ENCODE measurements at regions of chr7 and their contacts with region 1.

Region 1: DNA sequence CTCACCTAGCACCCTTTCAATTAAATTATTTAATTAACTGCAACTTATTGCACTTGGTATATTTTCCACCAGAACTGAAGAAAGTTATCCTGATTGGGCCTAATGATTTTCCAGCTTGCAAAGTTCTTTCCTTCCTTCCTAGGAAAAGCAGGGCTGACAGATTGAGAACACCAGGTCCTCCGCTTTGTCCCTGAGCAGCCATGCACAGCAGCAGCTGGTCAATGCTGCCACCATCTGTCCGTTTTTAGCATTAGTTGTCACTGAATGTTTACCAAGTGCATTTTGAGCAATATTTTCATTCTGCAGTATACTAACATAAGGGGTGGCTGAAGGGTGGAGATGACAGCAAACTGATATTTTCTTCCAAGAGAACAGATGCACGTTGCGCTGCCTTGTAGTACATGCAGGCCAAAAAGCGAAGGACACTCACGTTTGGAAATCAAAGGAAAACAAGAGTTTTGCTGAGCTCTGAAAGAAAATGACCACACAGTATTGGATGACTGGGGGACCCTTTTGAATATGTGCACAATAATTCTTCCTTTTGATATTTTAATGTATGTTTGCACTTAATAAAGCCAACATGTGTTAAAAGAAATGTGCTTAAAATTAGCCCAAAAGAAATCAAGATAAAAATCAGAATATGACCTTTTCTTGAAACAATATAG is 248.8 kb upstream of the PTN start:
- DNase-seq: no peak
- ATAC-seq: peak; percentile 89
- H3K4me3 ChIP-seq: no peak overlapping the region
- H3K27ac ChIP-seq: no peak overlapping the region
- H3K4me1 ChIP-seq: no peaks in the 10 kb centered on the region
- H3K27me3 ChIP-seq: no peaks in the 10 kb centered on the region
- CTCF ChIP-seq: peak; percentile 56 to 87 (median 58); a peak in 5 of 6 replicates
- EP300 ChIP-seq: 0 out of 4 replicates have a peak, but pooled peaks of 1 of the 2 experiments have one; percentile 22
- POLR2A ChIP-seq: no peak
- RAD21 ChIP-seq: peak; percentile 87

Region 2: GRCh38 chr7:135801045-135801693 is 1791.2 kb before region 1 on chr7:
- CTCF ChIA-PET with region 1: no interaction called
- POLR2A ChIA-PET with region 1: no interaction called
- RAD21 ChIA-PET with region 1: no interaction called
- SMC1A ChIA-PET with region 1: no interaction called
- in situ Hi-C with region 1: no loop called
- intact Hi-C with region 1: loop called (anchors 5 kb)
- DNase-seq: peak; percentile 35
- ATAC-seq: peak; percentile 91
- H3K4me3 ChIP-seq: no peak overlapping the region
- H3K27ac ChIP-seq: no peak overlapping the region
- H3K4me1 ChIP-seq: no peaks in the 10 kb centered on the region
- H3K27me3 ChIP-seq: 0 out of 4 replicates have a peak, but pooled peaks cover 0 to 2% of the 10 kb centered on the region in 2 experiments
- CTCF ChIP-seq: peak; percentile 71 to 87 (median 86)
- EP300 ChIP-seq: no peak
- POLR2A ChIP-seq: no peak
- RAD21 ChIP-seq: peak; percentile 99

Region 3: GRCh38 chr7:136868496-136869000 is 723.8 kb before region 1 on chr7 and contains the start of gene CHRM2:
- CTCF ChIA-PET with region 1: no interaction called
- POLR2A ChIA-PET with region 1: no interaction called
- RAD21 ChIA-PET with region 1: no interaction called
- SMC1A ChIA-PET with region 1: no interaction called
- in situ Hi-C with region 1: no loop called
- intact Hi-C with region 1: no loop called
- DNase-seq: no peak
- ATAC-seq: no peak
- H3K4me3 ChIP-seq: no peak within 1 kb of the TSS
- H3K27ac ChIP-seq: no peak within 1 kb of the TSS
- H3K4me1 ChIP-seq: no peaks in the 10 kb centered on the region
- H3K27me3 ChIP-seq: peaks cover 0 to 4% of the 10 kb centered on the region in 2 experiments; a peak in 2 of 4 replicates
- CTCF ChIP-seq: no peak
- EP300 ChIP-seq: no peak
- POLR2A ChIP-seq: no peak
- RAD21 ChIP-seq: no peak
- polyA plus RNA-seq, gene CHRM2: not detected

Region 4: DNA sequence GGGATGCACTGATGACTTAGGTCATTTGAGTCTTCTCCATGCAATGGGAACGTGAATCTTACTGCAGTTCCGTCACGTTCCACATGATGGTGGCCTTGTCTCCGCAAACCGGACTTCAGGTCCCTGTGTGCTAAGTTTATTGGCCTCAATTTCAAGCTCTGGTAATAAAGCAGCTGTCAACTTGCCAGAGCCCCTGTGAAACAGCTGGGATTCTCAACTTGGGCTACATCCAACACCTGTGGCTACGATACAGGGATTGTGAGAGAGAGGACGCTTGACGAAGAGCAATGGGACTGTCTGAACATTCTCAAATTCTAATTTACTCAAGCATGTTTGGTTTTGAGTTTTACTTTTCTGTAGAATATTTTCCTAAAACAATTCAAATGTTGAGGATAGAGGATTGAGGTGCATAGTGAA is 423.1 kb before region 1 on chr7:
- CTCF ChIA-PET with region 1: interaction called, 5 read pairs
- POLR2A ChIA-PET with region 1: no interaction called
- RAD21 ChIA-PET with region 1: interaction called, 4 read pairs
- SMC1A ChIA-PET with region 1: interaction called, 5 read pairs
- in situ Hi-C with region 1: loop called (anchors 25 kb)
- intact Hi-C with region 1: loop called (anchors 5 kb)
- DNase-seq: no peak
- ATAC-seq: peak; percentile 72
- H3K4me3 ChIP-seq: no peak overlapping the region
- H3K27ac ChIP-seq: no peak overlapping the region
- H3K4me1 ChIP-seq: no peaks in the 10 kb centered on the region
- H3K27me3 ChIP-seq: no peaks in the 10 kb centered on the region
- CTCF ChIP-seq: peak in 2 of 3 experiments; percentile 25 to 42; a peak in 4 of 6 replicates
- EP300 ChIP-seq: no peak
- POLR2A ChIP-seq: no peak
- RAD21 ChIP-seq: peak; percentile 43; the same call in 1 of the 2 replicates

Region 5: DNA sequence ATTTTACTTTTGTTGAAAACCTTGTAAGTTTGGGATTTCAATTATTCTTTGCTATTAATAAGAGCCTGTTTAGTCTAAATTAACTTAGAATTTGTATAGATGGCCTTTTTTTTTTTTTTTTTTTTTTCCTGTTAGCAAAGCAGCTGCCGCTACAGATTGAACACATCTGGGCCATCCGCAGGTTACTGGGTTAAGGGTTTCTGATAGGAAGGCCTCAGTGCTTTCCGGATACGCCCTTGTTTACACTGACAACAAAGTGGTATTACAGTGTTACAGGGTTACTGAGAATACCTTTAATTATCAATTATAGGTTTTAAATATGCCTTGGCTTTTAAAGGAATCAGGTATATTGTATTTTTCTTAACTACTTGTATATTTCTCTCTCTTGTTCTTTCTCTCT is 325.6 kb before region 1 on chr7:
- CTCF ChIA-PET with region 1: no interaction called
- POLR2A ChIA-PET with region 1: no interaction called
- RAD21 ChIA-PET with region 1: no interaction called
- SMC1A ChIA-PET with region 1: no interaction called
- in situ Hi-C with region 1: no loop called
- intact Hi-C with region 1: no loop called
- DNase-seq: no peak
- ATAC-seq: no peak
- H3K4me3 ChIP-seq: no peak overlapping the region
- H3K27ac ChIP-seq: no peak overlapping the region
- H3K4me1 ChIP-seq: no peaks in the 10 kb centered on the region
- H3K27me3 ChIP-seq: no peaks in the 10 kb centered on the region
- CTCF ChIP-seq: no peak
- EP300 ChIP-seq: no peak
- POLR2A ChIP-seq: no peak
- RAD21 ChIP-seq: no peak

Region 6: DNA sequence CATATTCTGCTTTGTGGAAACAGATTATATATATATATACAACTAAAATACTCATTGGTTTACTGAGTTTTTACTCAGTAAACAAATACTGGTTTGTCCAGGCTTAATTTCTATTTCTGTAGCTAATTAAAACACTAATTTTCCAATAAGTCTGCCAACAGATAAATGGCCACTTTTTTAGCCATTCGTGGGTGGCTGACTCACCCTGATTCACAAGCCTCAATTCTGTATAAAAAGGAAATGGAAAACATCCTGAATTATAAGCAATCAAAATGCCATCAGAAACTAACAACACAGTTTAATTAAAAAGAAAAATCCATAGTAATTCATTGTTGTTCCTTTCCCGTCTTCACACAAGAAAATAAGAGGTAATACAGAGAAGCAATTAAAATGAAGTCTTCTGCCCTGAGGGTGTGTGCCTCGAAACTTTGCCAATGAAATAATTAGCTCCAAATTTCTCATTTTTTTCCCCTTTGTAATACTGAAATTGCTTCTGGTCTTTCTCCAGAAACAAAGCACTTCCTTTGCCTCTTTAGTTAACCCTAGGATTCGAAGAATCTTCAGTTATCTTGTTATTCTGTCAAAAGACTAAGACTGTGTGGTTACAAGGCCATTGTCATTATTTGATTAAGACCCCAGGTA is 130.2 kb before region 1 on chr7:
- CTCF ChIA-PET with region 1: interaction called, 5 read pairs
- POLR2A ChIA-PET with region 1: no interaction called
- RAD21 ChIA-PET with region 1: interaction called, 3 read pairs
- SMC1A ChIA-PET with region 1: interaction called, 4 read pairs
- in situ Hi-C with region 1: no loop called
- intact Hi-C with region 1: loop called (anchors 10 kb)
- DNase-seq: no peak
- ATAC-seq: no peak
- H3K4me3 ChIP-seq: no peak overlapping the region
- H3K27ac ChIP-seq: no peak overlapping the region
- H3K4me1 ChIP-seq: no peaks in the 10 kb centered on the region
- H3K27me3 ChIP-seq: no peaks in the 10 kb centered on the region; a peak in 1 of 4 replicates
- CTCF ChIP-seq: no peak
- EP300 ChIP-seq: no peak
- POLR2A ChIP-seq: no peak
- RAD21 ChIP-seq: no peak

Region 7: DNA sequence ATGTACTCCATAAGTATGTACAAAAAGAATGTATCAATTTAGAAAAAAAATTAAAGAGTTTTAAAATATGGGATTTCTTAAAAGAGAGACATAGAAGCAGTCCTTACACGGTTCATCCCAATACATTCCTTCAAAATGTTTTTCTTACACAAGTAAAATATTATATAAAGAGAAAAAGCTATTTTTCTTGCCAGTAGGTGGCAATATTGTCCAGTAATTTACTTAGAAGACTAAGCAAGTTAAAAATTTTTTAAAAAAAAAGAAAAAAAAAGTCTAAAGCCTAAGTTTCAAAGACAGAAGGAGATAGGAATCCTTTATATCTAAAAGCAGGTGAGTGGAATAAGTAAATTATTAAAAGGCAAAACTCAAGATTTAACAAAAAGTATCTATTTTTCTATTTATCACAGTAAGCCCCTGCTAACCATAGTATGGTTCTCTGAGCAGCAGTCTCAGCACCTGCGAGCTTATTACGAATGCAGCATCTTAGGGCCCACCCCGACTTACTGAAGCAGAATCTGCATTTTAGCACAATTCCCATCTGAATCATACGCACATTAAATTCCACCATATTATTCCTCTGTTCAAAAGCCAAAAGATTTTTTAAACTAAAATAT is 13.8 kb after region 1 on chr7:
- CTCF ChIA-PET with region 1: interaction called, 11 read pairs
- POLR2A ChIA-PET with region 1: no interaction called
- RAD21 ChIA-PET with region 1: interaction called, 7 read pairs
- SMC1A ChIA-PET with region 1: interaction called, 6 read pairs
- in situ Hi-C with region 1: no loop called
- intact Hi-C with region 1: no loop called
- DNase-seq: no peak
- ATAC-seq: peak; percentile 51; the same call in 1 of the 3 replicates
- H3K4me3 ChIP-seq: no peak overlapping the region
- H3K27ac ChIP-seq: no peak overlapping the region
- H3K4me1 ChIP-seq: no peaks in the 10 kb centered on the region
- H3K27me3 ChIP-seq: no peaks in the 10 kb centered on the region
- CTCF ChIP-seq: peak in 1 of 3 experiments; percentile 29; a peak in 2 of 6 replicates
- EP300 ChIP-seq: no peak
- POLR2A ChIP-seq: no peak
- RAD21 ChIP-seq: no peak

Region 8: DNA sequence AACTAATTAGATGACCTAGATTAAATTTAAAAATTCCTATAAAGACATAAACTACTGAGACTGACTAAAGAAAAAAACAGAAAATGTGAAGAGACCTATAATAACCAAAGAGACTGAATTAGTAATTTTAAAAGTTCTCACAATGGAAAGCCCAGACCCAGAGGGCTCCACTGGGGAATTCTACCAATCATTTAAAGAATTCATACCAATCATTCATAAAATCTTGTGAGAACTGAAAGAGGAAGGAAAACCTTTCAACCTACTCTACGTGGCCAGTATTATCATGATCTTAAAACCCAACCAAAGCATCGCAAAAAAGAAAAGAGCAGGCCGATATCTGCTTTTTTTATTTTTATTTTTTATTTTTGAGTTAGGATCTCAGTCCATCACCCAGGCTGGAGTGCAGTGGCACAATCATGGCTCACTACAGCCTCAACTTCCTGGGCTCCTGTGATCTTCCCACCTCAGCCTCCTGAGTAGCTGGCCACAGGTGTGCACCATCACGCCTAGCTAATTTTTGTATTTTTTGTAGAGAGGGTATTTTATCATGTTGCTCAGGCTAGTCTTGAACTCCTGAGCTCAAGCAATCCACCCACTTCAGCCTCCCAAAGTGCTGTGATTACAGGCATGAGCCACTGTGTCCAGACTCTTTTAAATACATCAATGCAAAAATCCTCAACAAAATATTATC is 205.9 kb after region 1 on chr7:
- CTCF ChIA-PET with region 1: no interaction called
- POLR2A ChIA-PET with region 1: no interaction called
- RAD21 ChIA-PET with region 1: no interaction called
- SMC1A ChIA-PET with region 1: no interaction called
- in situ Hi-C with region 1: no loop called
- intact Hi-C with region 1: no loop called
- DNase-seq: peak; percentile 59
- ATAC-seq: peak; percentile 96
- H3K4me3 ChIP-seq: no peak overlapping the region
- H3K27ac ChIP-seq: no peak overlapping the region; the same call in 1 of the 2 replicates
- H3K4me1 ChIP-seq: no peaks in the 10 kb centered on the region
- H3K27me3 ChIP-seq: no peaks in the 10 kb centered on the region
- CTCF ChIP-seq: no peak
- EP300 ChIP-seq: peak; percentile 48 to 84; a peak in 3 of 4 replicates
- POLR2A ChIP-seq: no peak
- RAD21 ChIP-seq: no peak